Naive thymus-derived CD4-positive, alpha-beta T cell (primary cell): ENCODE measurements at regions of chr3 and their contacts with region 1.

Region 1: GRCh38 chr3:195956571-195956970 is 48.2 kb upstream of the TNK2 start:
- DNase-seq: no peak
- ATAC-seq: no peak
- H3K4me3 ChIP-seq: no peak overlapping the region
- H3K4me3 Mint-ChIP-seq: no peak overlapping the region
- H3K27ac ChIP-seq: no peak overlapping the region
- H3K27ac Mint-ChIP-seq: peak overlapping the region in 1 of 9 donors; percentile 19
- H3K4me1 ChIP-seq: no peaks in the 10 kb centered on the region
- H3K4me1 Mint-ChIP-seq: peaks cover 8 to 28% (median 18%) of the 10 kb centered on the region in 7 donors
- H3K27me3 ChIP-seq: no peaks in the 10 kb centered on the region
- H3K27me3 Mint-ChIP-seq: no peaks in the 10 kb centered on the region

Region 2: GRCh38 chr3:195692354-195692685 is 264.3 kb before region 1 on chr3:
- CTCF ChIA-PET with region 1: no interaction called
- POLR2A ChIA-PET with region 1: no interaction called
- intact Hi-C with region 1: loop called in 1 of 2 experiments (anchors 5 kb)
- DNase-seq: no peak
- ATAC-seq: no peak
- H3K4me3 ChIP-seq: no peak overlapping the region
- H3K4me3 Mint-ChIP-seq: no peak overlapping the region
- H3K27ac ChIP-seq: no peak overlapping the region
- H3K27ac Mint-ChIP-seq: peak overlapping the region in 2 of 9 donors; percentile 3 to 6
- H3K4me1 ChIP-seq: no peaks in the 10 kb centered on the region
- H3K4me1 Mint-ChIP-seq: peaks cover 0 to 15% (median 3%) of the 10 kb centered on the region in 7 donors
- H3K27me3 ChIP-seq: no peaks in the 10 kb centered on the region
- H3K27me3 Mint-ChIP-seq: no peaks in the 10 kb centered on the region